PC-9 (cell line): ENCODE measurements at regions of chr5 and their contacts with region 1.

Region 1: GRCh38 chr5:37816883-37817282 is 23.0 kb downstream of the GDNF start:
- DNase-seq: no peak
- H3K4me3 ChIP-seq: no peak overlapping the region
- H3K27ac ChIP-seq: no peak overlapping the region
- H3K4me1 ChIP-seq: peaks cover 10% of the 10 kb centered on the region
- H3K27me3 ChIP-seq: no peaks in the 10 kb centered on the region
- CTCF ChIP-seq: no peak

Region 2: GRCh38 chr5:37520811-37521210 is 296.1 kb before region 1 on chr5:
- CTCF ChIA-PET with region 1: no interaction called
- POLR2A ChIA-PET with region 1: no interaction called
- intact Hi-C with region 1: no loop called
- DNase-seq: no peak
- H3K4me3 ChIP-seq: no peak overlapping the region
- H3K27ac ChIP-seq: no peak overlapping the region
- H3K4me1 ChIP-seq: no peaks in the 10 kb centered on the region
- H3K27me3 ChIP-seq: no peaks in the 10 kb centered on the region
- CTCF ChIP-seq: no peak

Region 3: DNA sequence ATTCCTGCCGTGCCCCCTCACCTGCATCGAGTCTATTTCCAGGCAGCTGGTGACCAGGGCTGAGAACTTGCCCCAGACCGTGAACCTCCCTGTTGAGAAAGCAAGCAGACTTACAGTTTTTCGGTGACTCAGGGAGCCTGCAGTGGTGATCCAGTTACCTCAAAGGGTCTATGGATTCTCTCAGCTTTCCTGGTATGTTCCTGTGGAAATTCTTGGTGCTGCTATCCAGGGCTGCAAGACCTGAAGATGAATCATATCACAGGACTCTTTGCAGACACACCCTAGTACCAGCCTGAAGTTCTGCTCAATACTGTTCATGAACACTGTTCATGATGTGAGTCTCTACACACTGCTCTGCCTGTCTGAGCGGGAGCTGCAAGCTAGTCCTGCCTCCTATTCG is 283.0 kb before region 1 on chr5:
- CTCF ChIA-PET with region 1: no interaction called
- POLR2A ChIA-PET with region 1: no interaction called
- intact Hi-C with region 1: loop called (anchors 10 kb)
- DNase-seq: peak; percentile 68 to 77
- H3K4me3 ChIP-seq: no peak overlapping the region
- H3K27ac ChIP-seq: peak overlapping the region; percentile 21
- H3K4me1 ChIP-seq: peaks cover 8% of the 10 kb centered on the region; the same call in 1 of the 2 replicates
- H3K27me3 ChIP-seq: no peaks in the 10 kb centered on the region
- CTCF ChIP-seq: no peak

Region 4: GRCh38 chr5:37774912-37775483 is 41.9 kb before region 1 on chr5:
- CTCF ChIA-PET with region 1: no interaction called
- POLR2A ChIA-PET with region 1: no interaction called
- intact Hi-C with region 1: loop called (anchors 2 kb)
- DNase-seq: no peak
- H3K4me3 ChIP-seq: no peak overlapping the region
- H3K27ac ChIP-seq: no peak overlapping the region
- H3K4me1 ChIP-seq: peaks cover 26% of the 10 kb centered on the region
- H3K27me3 ChIP-seq: no peaks in the 10 kb centered on the region
- CTCF ChIP-seq: peak; percentile 92

Region 5: GRCh38 chr5:37792975-37793631 is 23.8 kb before region 1 on chr5:
- CTCF ChIA-PET with region 1: no interaction called
- POLR2A ChIA-PET with region 1: no interaction called
- intact Hi-C with region 1: loop called (anchors 2 kb)
- DNase-seq: peak; percentile 73 to 75
- H3K4me3 ChIP-seq: no peak overlapping the region
- H3K27ac ChIP-seq: peak overlapping the region; percentile 14; the same call in 1 of the 2 replicates
- H3K4me1 ChIP-seq: peaks cover 16% of the 10 kb centered on the region
- H3K27me3 ChIP-seq: no peaks in the 10 kb centered on the region
- CTCF ChIP-seq: no peak

Region 6: DNA sequence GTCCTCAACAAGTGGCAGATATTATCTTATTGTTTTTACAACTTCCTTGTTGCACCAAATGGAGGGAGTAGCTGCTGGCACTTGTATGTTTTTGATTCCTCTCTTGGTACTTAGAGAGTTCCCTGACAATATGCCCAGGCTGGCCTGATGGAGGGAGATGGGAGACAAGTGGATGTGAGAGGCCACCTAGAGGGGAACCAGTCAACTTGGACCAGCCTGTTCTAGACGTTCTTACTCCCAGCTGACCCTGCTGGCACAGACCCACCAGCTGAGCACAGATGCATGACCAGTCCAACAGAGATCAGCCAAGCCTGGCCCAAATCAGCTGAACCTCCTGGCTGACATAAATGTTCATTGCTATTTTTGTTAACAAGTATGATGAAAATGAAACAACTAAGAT is 83.8 kb after region 1 on chr5:
- CTCF ChIA-PET with region 1: no interaction called
- POLR2A ChIA-PET with region 1: no interaction called
- intact Hi-C with region 1: no loop called
- DNase-seq: peak in 1 of 2 experiments; percentile 18
- H3K4me3 ChIP-seq: no peak overlapping the region
- H3K27ac ChIP-seq: no peak overlapping the region
- H3K4me1 ChIP-seq: no peaks in the 10 kb centered on the region
- H3K27me3 ChIP-seq: 0 out of 2 replicates have a peak, but pooled peaks cover 2% of the 10 kb centered on the region
- CTCF ChIP-seq: no peak